MCF 10A (cell line): ENCODE measurements at regions of chr3 and their contacts with region 1.

Region 1: DNA sequence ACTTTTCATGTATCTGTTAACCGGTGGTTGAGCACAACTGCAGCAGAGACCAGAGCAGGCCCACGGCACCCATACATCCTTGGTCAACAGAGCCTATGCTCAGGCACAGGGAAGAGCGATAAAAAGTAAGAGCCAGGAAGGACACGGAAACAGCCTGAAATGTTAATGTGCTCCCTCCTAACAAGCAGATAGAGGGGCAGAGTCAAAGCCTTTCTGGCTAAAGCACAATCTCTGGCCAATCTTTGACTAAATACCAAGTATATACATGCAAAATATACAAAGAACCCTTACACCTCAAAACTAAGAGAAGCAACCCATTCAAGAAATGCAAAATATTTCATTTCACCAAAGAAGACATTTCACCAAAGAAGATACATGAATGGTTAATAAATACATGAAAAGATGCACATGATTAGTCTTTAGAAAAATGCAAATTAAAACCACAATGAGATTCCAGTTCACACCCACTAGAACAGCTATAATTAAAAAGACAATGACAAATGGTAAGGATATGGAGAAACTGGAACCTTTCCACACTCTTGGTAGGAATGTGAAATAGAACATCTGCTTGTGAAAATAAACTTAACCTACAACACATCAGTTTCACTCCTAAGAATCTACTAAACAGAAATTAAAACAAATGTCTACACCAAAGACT is 88.0 kb downstream of the OSBPL10 start:
- DNase-seq: no peak
- H3K4me3 Mint-ChIP-seq: no peak overlapping the region
- H3K27ac Mint-ChIP-seq: peak overlapping the region; percentile 88
- H3K4me1 Mint-ChIP-seq: peaks cover 70% of the 10 kb centered on the region
- H3K27me3 Mint-ChIP-seq: no peaks in the 10 kb centered on the region
- CTCF ChIP-seq: no peak

Region 2: DNA sequence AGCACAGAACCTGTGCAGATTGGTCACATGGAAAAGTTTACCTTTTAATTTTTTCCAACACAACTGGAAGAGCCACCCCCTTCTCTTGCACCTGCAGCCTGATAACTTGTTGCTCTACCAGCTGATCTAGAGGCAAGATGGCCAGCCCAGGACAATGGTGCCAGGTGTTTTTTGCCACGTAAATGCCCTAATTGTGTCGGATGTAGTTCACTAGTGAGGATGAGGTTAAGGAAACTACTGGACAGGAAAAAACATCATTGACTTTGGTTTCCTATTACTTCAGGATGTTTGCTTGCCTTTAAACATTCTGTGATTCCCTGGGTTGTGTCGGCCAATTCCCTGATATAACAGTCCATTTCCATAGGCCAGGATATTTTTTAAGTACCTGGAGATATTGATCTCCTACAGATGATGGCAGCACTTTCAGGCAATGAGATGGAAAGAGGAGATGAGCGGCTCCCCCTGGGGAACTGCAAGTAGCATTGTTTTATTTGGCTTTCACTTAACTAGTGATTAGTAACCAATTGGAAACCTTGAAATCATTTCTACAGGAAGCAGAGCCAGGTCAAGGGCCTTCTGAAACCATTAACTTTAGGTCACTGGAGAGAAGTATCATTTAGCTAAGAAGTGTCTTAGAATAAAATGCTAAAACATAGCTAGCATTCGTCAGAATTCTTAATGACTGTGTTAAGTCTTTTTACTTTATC is 15.5 kb after region 1 on chr3:
- CTCF ChIA-PET with region 1: interaction called, 4 read pairs
- POLR2A ChIA-PET with region 1: interaction called, 25 read pairs
- intact Hi-C with region 1: no loop called
- DNase-seq: peak; percentile 38
- H3K4me3 Mint-ChIP-seq: no peak overlapping the region
- H3K27ac Mint-ChIP-seq: peak overlapping the region; percentile 68
- H3K4me1 Mint-ChIP-seq: peaks cover 47% of the 10 kb centered on the region
- H3K27me3 Mint-ChIP-seq: no peaks in the 10 kb centered on the region
- CTCF ChIP-seq: no peak

Region 3: GRCh38 chr3:31960793-31961431 is 67.9 kb after region 1 on chr3:
- CTCF ChIA-PET with region 1: no interaction called
- POLR2A ChIA-PET with region 1: interaction called, 23 read pairs
- intact Hi-C with region 1: no loop called
- DNase-seq: peak; percentile 64
- H3K4me3 Mint-ChIP-seq: peak overlapping the region; percentile 70
- H3K27ac Mint-ChIP-seq: peak overlapping the region; percentile 91
- H3K4me1 Mint-ChIP-seq: peaks cover 43% of the 10 kb centered on the region
- H3K27me3 Mint-ChIP-seq: no peaks in the 10 kb centered on the region
- CTCF ChIP-seq: no peak

Region 4: GRCh38 chr3:31974964-31975363 is 81.9 kb after region 1 on chr3:
- CTCF ChIA-PET with region 1: interaction called, 3 read pairs
- POLR2A ChIA-PET with region 1: interaction called, 34 read pairs
- intact Hi-C with region 1: loop called (anchors 2 kb)
- DNase-seq: no peak
- H3K4me3 Mint-ChIP-seq: no peak overlapping the region
- H3K27ac Mint-ChIP-seq: peak overlapping the region; percentile 76
- H3K4me1 Mint-ChIP-seq: peaks cover 59% of the 10 kb centered on the region
- H3K27me3 Mint-ChIP-seq: no peaks in the 10 kb centered on the region
- CTCF ChIP-seq: no peak